GM12878 (cell line): ENCODE measurements at regions of chr9 and their contacts with region 1.

Region 1: DNA sequence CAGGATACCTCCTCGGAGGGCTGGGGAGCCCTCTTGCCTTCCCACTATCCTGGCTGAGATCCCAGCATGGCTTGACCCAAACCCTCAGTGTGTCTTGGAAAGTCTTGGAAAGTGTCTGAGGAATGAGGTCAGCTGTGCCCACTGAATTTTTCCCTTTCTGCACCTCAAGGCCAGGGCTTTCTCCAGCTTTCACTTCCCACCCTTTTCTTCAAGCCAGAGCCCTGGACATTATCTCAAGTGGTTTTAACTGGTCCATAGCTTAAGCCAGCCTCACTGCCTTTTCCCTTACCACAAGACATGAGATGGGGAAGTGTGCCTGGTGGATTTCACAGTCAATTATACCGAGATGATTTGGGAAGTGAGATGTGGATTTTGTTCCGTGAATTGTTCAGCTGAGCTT is 35.7 kb upstream of the LHX2 start:
- DNase-seq: no peak
- ATAC-seq: no peak
- H3K4me3 ChIP-seq: no peak overlapping the region
- H3K27ac ChIP-seq: no peak overlapping the region
- H3K4me1 ChIP-seq: no peaks in the 10 kb centered on the region
- H3K27me3 ChIP-seq: no peaks in the 10 kb centered on the region
- CTCF ChIP-seq: no peak
- EP300 ChIP-seq: no peak
- POLR2A ChIP-seq: no peak
- RAD21 ChIP-seq: no peak

Region 2: GRCh38 chr9:123988311-123989049 is 12.6 kb after region 1 on chr9:
- CTCF ChIA-PET with region 1: no interaction called
- POLR2A ChIA-PET with region 1: no interaction called
- RAD21 ChIA-PET with region 1: no interaction called
- SMC1A ChIA-PET with region 1: no interaction called
- in situ Hi-C with region 1: no loop called
- intact Hi-C with region 1: loop called (anchors 2 kb)
- DNase-seq: no peak
- ATAC-seq: no peak
- H3K4me3 ChIP-seq: no peak overlapping the region
- H3K27ac ChIP-seq: no peak overlapping the region
- H3K4me1 ChIP-seq: no peaks in the 10 kb centered on the region
- H3K27me3 ChIP-seq: no peaks in the 10 kb centered on the region
- CTCF ChIP-seq: no peak
- EP300 ChIP-seq: no peak
- POLR2A ChIP-seq: no peak
- RAD21 ChIP-seq: no peak